ENCODE measurements at regions of chr1 and their contacts with region 1.

Region 1: GRCh38 chr1:208245185-208245705 is 1.1 kb upstream of the PLXNA2 start:
- ATAC-seq: peak; percentile 34 to 68 (median 58)
- H3K4me3 ChIP-seq: peak overlapping the region; percentile 52 to 92 (median 87)
- H3K27ac ChIP-seq: no peak overlapping the region
- H3K4me1 ChIP-seq: peaks cover 33 to 41% of the 10 kb centered on the region in 2 donors

Region 2: GRCh38 chr1:207959141-207959825 is 286.0 kb before region 1 on chr1:
- in situ Hi-C with region 1: no loop called
- ATAC-seq: peak in 7 of 8 experiments; percentile 4 to 53 (median 31)
- H3K4me3 ChIP-seq: peak overlapping the region; percentile 13 to 37 (median 19)
- H3K27ac ChIP-seq: no peak overlapping the region
- H3K4me1 ChIP-seq: peaks cover 7 to 9% of the 10 kb centered on the region in 2 donors

Region 3: DNA sequence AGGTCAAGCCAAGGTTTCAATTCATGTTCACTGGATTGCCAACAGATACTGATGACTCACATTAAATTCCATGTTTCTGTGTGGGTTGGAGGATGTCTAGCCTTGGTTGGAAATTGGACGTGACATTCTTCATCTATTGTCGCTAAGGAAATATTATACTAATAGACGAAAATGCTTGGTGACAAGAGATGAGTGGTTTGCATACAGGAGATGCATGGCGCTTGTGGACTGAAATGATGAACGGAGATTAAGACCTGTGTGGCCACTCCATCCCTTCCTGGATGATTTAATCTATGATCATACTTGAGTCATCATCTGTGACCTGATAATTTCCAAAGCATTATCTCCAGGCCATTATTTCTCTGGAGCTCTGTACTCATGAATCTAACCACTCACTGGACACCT is 237.3 kb before region 1 on chr1:
- in situ Hi-C with region 1: loop called in 4 of 9 experiments (anchors 10 to 25 kb)
- ATAC-seq: peak in 6 of 8 experiments; percentile 38 to 83 (median 74)
- H3K4me3 ChIP-seq: no peak overlapping the region
- H3K27ac ChIP-seq: no peak overlapping the region
- H3K4me1 ChIP-seq: peaks cover 11 to 30% of the 10 kb centered on the region in 2 donors

Region 4: DNA sequence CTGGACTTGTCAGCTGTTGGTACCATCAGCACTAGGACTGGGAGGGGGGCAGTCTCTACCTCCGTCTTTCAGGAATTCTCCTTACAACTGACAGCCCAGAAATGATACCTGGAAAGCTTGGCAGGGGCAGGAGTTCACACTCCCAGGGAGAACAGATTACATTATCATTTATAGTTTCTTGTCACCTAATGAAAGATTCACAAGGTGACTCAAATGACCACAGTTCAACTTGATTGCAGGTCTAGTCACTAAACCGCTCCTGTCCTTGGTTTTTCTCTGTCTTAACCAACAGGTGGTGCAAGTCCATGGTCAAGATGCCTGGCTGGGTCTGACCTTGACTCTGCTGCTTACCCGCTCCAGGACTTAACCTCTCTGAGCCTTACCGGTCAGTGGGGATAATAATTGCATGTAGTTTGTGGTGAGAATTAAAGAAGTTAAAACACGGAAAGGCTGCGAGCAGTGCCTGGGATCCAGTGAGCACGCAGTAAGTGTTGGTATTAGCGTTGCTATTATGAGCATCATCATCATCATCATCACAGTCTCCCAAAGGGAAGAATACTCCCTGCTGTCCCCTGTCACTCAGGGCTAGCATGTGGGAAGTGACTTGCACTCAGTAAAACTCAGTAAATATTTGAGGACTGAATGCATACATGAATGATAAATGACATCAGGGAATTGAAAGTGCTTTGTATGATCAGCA is 209.0 kb before region 1 on chr1:
- in situ Hi-C with region 1: loop called in 1 of 9 experiments (anchors 25 kb)
- ATAC-seq: peak in 4 of 8 experiments; percentile 31 to 46 (median 40)
- H3K4me3 ChIP-seq: no peak overlapping the region
- H3K27ac ChIP-seq: no peak overlapping the region
- H3K4me1 ChIP-seq: peaks cover 3 to 8% of the 10 kb centered on the region in 2 donors

Region 5: DNA sequence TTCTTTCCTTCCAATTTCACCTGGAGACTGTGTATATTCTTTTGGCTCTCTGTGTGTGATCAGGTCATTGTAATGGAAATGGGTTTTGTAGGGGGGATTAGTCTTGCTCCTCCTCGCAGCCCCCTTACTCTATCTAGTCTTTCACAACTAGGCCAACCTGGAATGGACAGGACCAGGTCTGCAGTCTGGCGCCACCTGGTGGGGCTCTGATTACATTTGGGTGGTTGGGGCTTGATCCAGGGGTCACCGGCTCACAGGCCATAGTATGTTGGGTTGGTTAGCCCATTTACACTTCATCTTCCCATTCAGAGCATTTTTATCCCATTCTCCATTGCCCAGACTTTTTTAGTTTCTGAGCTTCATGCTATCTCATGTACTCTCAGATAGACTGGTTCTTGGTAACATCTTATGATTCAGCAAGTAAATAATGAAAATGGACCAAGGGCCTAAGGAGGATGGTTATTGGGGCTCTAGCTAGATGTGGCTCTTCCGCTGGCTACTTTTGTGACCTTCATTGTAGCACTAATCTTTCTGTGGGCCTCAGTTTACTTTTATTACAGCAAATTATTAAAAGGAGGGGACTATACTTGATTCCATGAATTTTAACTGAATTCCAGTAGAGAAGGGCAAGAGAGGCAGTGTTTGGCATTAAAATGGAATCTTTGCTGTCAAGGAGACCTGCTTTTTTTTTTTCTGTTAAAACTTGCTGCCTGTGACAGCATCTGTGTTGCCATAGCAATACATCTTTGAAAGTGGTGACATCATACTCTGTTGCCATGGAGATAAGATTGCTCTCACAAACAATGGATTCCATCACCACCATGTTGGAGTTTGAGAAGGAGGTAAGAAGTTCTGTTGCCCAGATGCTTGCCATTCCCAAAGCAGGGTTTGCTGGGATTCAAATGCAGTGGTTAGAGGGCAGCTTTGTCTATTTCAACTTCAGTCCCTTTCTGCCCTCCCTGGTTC is 151.2 kb before region 1 on chr1:
- in situ Hi-C with region 1: loop called in 1 of 9 experiments (anchors 25 kb)
- ATAC-seq: peak; percentile 27 to 85 (median 74)
- H3K4me3 ChIP-seq: no peak overlapping the region
- H3K27ac ChIP-seq: no peak overlapping the region
- H3K4me1 ChIP-seq: peaks cover 20 to 32% of the 10 kb centered on the region in 2 donors

Region 6: DNA sequence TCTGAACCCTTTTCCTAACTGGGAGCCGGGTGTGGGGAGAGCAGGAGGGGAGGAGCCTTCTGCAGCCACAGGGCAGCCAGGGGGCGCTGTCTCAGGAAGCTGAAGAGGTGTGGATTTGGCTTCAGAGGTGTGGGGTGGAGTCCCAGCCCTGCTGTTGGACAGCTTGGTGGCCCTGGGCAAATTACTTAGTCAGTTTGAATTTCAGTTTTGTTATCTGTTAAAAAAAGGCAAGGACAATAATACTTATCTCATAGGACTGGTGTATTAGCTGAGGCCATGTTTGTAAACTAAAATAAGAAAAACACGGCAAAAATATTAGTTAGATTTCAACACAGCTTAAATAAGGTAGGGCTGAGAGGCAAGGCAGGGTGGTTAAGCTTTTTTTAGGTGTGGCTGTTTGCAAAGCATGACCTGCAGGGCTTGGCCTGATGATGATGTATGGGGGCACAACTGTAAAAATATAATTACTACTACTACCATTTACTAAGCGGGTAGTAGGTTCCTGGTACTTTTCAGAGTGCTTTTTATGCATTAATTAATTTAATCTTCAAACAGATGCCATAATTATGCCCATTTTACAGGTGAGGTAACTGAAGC is 112.9 kb before region 1 on chr1:
- in situ Hi-C with region 1: loop called in 2 of 9 experiments (anchors 25 kb)
- ATAC-seq: peak; percentile 55 to 82 (median 72)
- H3K4me3 ChIP-seq: no peak overlapping the region
- H3K27ac ChIP-seq: no peak overlapping the region
- H3K4me1 ChIP-seq: peaks cover 20 to 28% of the 10 kb centered on the region in 2 donors

Region 7: GRCh38 chr1:208534599-208534897 is 289.3 kb after region 1 on chr1:
- in situ Hi-C with region 1: no loop called
- ATAC-seq: peak in 4 of 8 experiments; percentile 39 to 83 (median 48)
- H3K4me3 ChIP-seq: no peak overlapping the region
- H3K27ac ChIP-seq: no peak overlapping the region
- H3K4me1 ChIP-seq: peaks cover 63 to 64% of the 10 kb centered on the region in 2 donors

Region 8: GRCh38 chr1:209207701-209208286 is 962.5 kb after region 1 on chr1:
- in situ Hi-C with region 1: loop called in 3 of 9 experiments (anchors 25 kb)
- ATAC-seq: peak; percentile 92 to 98 (median 96)
- H3K4me3 ChIP-seq: peak overlapping the region; percentile 11 to 32 (median 31)
- H3K27ac ChIP-seq: peak overlapping the region in 1 of 2 donors; percentile 4
- H3K4me1 ChIP-seq: peaks cover 18 to 49% of the 10 kb centered on the region in 2 donors

Measured in motor neuron (in vitro differentiated cells).